Mammary epithelial cell (primary cell): ENCODE measurements at regions of chr2 and their contacts with region 1.

Region 1: DNA sequence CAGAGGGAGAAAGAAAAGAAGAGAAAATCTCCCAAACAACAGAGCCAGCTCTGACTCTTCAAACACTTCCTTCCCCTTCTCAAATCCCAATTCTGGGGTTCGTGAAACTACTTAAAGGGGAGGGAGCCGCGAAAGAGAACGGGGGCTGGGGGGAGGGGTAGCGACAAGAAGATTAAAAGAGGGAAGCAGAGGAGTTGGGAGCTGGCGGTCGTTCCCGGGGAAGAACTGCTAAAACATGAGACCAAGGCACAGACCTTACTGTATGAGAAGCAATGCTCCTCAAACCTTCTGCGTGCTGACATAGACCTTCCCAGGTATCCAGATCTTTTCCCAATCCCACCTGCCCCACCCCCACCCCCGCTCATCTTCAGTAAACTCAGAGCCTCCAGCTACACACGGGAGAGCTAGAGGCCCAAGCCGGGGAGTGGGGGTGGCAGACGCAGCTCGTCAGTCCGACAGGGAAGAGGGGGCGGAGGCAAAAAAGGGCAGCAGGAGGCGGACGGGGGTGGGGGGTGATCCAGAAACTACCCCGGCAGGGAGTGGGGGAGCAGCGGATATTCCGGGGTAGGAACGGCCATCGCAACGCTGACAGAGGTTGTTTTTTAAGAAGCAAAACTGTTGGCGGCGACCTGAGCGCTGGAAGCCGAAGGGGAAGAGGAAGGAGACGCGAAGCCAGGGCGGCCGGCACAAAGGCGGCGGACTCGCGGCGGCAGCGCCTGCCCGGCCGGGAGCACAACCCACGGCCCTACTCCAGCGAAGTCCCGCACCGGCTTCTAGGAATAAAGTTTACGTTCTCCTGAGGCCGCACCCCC is 1.0 kb downstream of the BAZ2B start:
- DNase-seq: peak; percentile 91
- H3K4me3 ChIP-seq: peak overlapping the region; percentile 68 to 99 (median 93)
- H3K27ac ChIP-seq: peak overlapping the region; percentile 96
- H3K4me1 ChIP-seq: peaks cover 16% of the 10 kb centered on the region
- H3K27me3 ChIP-seq: no peaks in the 10 kb centered on the region
- CTCF ChIP-seq: no peak

Region 2: DNA sequence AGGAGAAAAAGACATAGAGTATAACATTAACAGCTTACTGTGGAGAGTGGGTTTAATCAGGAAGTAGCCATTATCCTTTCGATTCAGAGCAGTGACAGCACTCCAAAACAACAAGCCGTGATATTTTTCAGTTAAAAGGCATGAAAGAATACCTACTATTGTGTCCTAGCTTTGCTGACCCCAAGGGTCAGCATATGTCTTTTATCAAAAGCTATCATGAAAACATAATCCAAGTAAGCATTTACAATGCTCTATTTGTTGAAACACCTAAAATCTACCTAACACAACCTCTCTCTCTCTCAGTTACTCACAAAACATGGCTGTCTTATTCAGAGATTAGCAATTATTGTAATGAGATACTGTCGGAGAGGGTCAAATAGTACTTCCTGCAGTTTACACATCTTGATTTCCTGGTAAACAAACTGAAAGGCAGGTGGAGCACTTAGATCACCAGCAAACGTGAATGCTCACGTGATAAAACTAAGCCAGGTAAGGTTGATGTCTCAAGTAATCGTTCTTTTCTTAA is 99.0 kb before region 1 on chr2:
- CTCF ChIA-PET with region 1: no interaction called
- dilution Hi-C with region 1: no loop called
- in situ Hi-C with region 1: no loop called
- intact Hi-C with region 1: loop called (anchors 2 kb)
- DNase-seq: peak; percentile 80
- H3K4me3 ChIP-seq: peak overlapping the region; percentile 38 to 56 (median 48)
- H3K27ac ChIP-seq: peak overlapping the region; percentile 82
- H3K4me1 ChIP-seq: peaks cover 10% of the 10 kb centered on the region
- H3K27me3 ChIP-seq: no peaks in the 10 kb centered on the region
- CTCF ChIP-seq: peak in 1 of 2 donors; percentile 32

Region 3: GRCh38 chr2:159637971-159638501 is 22.7 kb after region 1 on chr2:
- CTCF ChIA-PET with region 1: interaction called, 4 read pairs
- dilution Hi-C with region 1: no loop called
- in situ Hi-C with region 1: no loop called
- intact Hi-C with region 1: loop called (anchors 1 kb)
- DNase-seq: peak; percentile 99
- H3K4me3 ChIP-seq: no peak overlapping the region
- H3K27ac ChIP-seq: peak overlapping the region; percentile 74
- H3K4me1 ChIP-seq: peaks cover 17% of the 10 kb centered on the region
- H3K27me3 ChIP-seq: no peaks in the 10 kb centered on the region
- CTCF ChIP-seq: no peak

Region 4: DNA sequence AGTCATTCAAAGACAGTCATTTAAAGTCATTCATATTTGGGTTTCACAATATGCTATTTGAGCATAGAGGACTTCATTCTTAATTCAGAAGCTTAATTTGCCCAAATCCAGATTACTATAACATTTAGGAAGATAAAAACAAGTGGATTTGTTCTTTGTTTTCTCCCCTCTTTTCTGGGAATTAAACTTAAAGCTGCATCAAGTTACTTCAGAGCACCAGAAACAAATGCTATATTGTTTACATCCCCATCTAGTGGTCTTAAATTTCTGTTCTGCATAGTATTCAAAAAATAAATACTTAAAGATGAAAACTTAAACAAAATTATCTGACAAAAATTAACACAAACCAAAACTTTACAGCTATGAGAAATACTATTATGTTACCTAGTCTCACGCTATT is 62.3 kb after region 1 on chr2:
- CTCF ChIA-PET with region 1: no interaction called
- dilution Hi-C with region 1: no loop called
- in situ Hi-C with region 1: no loop called
- intact Hi-C with region 1: loop called (anchors 1 kb)
- DNase-seq: no peak
- H3K4me3 ChIP-seq: no peak overlapping the region
- H3K27ac ChIP-seq: no peak overlapping the region
- H3K4me1 ChIP-seq: no peaks in the 10 kb centered on the region
- H3K27me3 ChIP-seq: no peaks in the 10 kb centered on the region
- CTCF ChIP-seq: peak in 1 of 2 donors; percentile 42

Region 5: DNA sequence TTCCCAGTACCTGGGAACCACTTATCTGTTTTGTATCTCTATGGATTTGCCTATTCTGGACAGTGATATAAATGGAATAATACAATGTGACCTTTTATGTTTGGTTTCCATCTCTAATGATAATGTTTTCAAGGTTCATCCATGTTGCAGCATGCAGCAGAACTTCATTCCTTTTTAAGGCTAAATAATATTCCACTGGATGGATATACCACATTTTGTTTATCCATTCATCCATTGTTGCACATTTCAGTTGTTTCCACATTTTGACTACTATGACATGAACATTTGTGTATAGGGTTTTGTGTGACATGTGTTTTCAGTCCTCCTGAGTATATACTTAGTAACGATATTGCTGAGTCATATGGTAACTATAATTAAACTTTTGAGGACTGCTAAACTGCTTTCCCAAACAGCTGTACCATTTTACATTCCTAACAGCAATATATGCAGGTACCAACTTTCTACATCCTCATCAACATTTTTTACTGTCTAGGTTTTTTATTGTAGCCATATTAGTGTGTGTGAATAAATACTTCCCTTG is 79.2 kb after region 1 on chr2:
- CTCF ChIA-PET with region 1: no interaction called
- dilution Hi-C with region 1: no loop called
- in situ Hi-C with region 1: no loop called
- intact Hi-C with region 1: no loop called
- DNase-seq: no peak
- H3K4me3 ChIP-seq: no peak overlapping the region
- H3K27ac ChIP-seq: no peak overlapping the region
- H3K4me1 ChIP-seq: no peaks in the 10 kb centered on the region
- H3K27me3 ChIP-seq: no peaks in the 10 kb centered on the region
- CTCF ChIP-seq: no peak